Endothelial cell of umbilical vein (primary cell): ENCODE measurements at regions of chrX and their contacts with region 1.

Region 1: GRCh38 chrX:37745354-37745753 is 34.5 kb upstream of the CYBB start:
- DNase-seq: peak; percentile 51
- H3K4me3 ChIP-seq: no peak overlapping the region
- H3K27ac ChIP-seq: no peak overlapping the region
- H3K4me1 ChIP-seq: no peaks in the 10 kb centered on the region
- H3K27me3 ChIP-seq: no peaks in the 10 kb centered on the region
- CTCF ChIP-seq: peak; percentile 56 to 63
- POLR2A ChIP-seq: no peak

Region 2: GRCh38 chrX:37380920-37381319 is 364.4 kb before region 1 on chrX:
- CTCF ChIA-PET with region 1: no interaction called
- POLR2A ChIA-PET with region 1: no interaction called
- dilution Hi-C with region 1: no loop called
- intact Hi-C with region 1: no loop called
- DNase-seq: peak; percentile 91
- H3K4me3 ChIP-seq: no peak overlapping the region
- H3K27ac ChIP-seq: peak overlapping the region; percentile 53
- H3K4me1 ChIP-seq: peaks cover 37% of the 10 kb centered on the region
- H3K27me3 ChIP-seq: no peaks in the 10 kb centered on the region
- CTCF ChIP-seq: no peak
- POLR2A ChIP-seq: peak; percentile 26

Region 3: GRCh38 chrX:37825209-37825842 is 80.0 kb after region 1 on chrX:
- CTCF ChIA-PET with region 1: interaction called, 33 read pairs
- POLR2A ChIA-PET with region 1: no interaction called
- dilution Hi-C with region 1: no loop called
- intact Hi-C with region 1: loop called (anchors 1 kb)
- DNase-seq: peak; percentile 33
- H3K4me3 ChIP-seq: no peak overlapping the region
- H3K27ac ChIP-seq: no peak overlapping the region
- H3K4me1 ChIP-seq: no peaks in the 10 kb centered on the region
- H3K27me3 ChIP-seq: no peaks in the 10 kb centered on the region
- CTCF ChIP-seq: peak; percentile 59
- POLR2A ChIP-seq: no peak

Region 4: DNA sequence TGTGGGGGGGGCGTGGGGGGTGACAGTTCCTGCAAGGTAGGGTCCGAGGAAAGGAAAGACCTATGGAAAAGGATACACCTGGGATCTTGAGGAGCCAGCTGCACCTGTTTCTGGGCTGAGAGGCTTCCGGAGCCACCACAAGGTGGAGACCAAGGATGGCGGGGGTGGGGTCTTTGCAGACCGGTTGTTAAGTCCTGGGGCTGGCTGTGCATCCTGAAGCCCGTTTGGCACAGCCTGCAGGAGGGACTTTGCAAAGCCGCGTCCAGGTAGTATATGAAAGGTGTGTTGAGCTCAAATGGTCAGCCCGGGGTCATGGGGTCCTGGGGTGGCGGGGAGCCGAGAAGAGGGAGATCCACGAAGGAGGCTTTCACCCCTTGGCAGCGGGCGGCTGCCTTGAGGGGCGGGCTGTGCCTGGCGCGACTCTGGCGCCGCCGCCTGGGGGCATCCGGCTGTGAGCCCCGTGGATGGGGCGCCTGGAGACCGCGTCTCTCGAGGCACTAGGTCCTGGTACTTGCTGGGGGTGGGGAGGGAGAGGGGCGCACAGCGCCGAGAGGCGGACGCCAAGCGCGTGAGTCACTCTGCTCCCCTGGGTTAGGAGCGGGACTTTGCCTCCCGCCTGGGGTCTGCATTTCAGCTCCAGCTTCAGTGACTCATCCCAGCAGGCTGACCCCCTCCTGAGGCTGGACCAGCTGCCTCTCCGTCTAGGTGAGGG is 160.2 kb after region 1 on chrX:
- CTCF ChIA-PET with region 1: no interaction called
- POLR2A ChIA-PET with region 1: no interaction called
- dilution Hi-C with region 1: no loop called
- intact Hi-C with region 1: loop called (anchors 10 kb)
- DNase-seq: peak; percentile 18
- H3K4me3 ChIP-seq: peak overlapping the region in 2 of 3 experiments; percentile 17
- H3K27ac ChIP-seq: no peak overlapping the region
- H3K4me1 ChIP-seq: peaks cover 7% of the 10 kb centered on the region
- H3K27me3 ChIP-seq: peaks cover 0 to 5% of the 10 kb centered on the region in 2 experiments
- CTCF ChIP-seq: peak in 1 of 2 donors; percentile 29
- POLR2A ChIP-seq: no peak

Region 5: GRCh38 chrX:37926700-37927099 is 181.3 kb after region 1 on chrX:
- CTCF ChIA-PET with region 1: interaction called, 4 read pairs
- POLR2A ChIA-PET with region 1: no interaction called
- dilution Hi-C with region 1: no loop called
- intact Hi-C with region 1: loop called (anchors 5 kb)
- DNase-seq: peak; percentile 29
- H3K4me3 ChIP-seq: no peak overlapping the region
- H3K27ac ChIP-seq: no peak overlapping the region
- H3K4me1 ChIP-seq: peaks cover 7% of the 10 kb centered on the region
- H3K27me3 ChIP-seq: no peaks in the 10 kb centered on the region
- CTCF ChIP-seq: peak in 1 of 2 donors; percentile 19
- POLR2A ChIP-seq: no peak

Region 6: DNA sequence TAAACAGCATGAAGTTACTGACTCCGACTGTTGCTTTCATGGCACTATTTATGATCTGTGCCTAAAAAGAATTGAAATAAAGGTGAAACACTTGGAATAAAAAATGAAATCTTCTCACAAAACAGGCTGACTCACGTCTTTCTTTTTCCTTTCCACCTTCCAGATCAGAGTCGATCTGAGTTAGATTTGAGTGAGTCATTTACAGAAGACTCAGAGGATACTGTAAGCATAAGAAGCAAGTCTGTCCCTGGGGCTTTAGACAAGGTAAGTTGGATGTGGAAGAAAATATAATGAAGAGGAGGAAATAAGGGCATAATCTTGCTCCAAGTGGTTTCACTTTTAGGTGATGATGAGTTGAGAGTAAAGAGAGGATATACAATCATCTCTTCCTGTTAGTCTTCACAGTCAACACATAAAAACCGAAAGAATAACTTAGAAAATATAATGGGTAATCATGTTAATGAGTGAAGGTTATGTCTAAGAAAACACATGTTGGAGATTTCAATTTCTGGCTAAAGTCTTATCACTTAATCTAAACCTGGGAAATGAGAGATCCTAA is 350.7 kb after region 1 on chrX:
- CTCF ChIA-PET with region 1: no interaction called
- POLR2A ChIA-PET with region 1: no interaction called
- dilution Hi-C with region 1: no loop called
- intact Hi-C with region 1: no loop called
- DNase-seq: peak; percentile 63
- H3K4me3 ChIP-seq: peak overlapping the region in 1 of 3 experiments; percentile 35
- H3K27ac ChIP-seq: no peak overlapping the region
- H3K4me1 ChIP-seq: peaks cover 12% of the 10 kb centered on the region
- H3K27me3 ChIP-seq: no peaks in the 10 kb centered on the region
- CTCF ChIP-seq: no peak
- POLR2A ChIP-seq: no peak

Region 7: GRCh38 chrX:38166478-38167083 is 421.2 kb after region 1 on chrX:
- CTCF ChIA-PET with region 1: interaction called, 29 read pairs
- POLR2A ChIA-PET with region 1: no interaction called
- dilution Hi-C with region 1: no loop called
- intact Hi-C with region 1: no loop called
- DNase-seq: peak; percentile 26
- H3K4me3 ChIP-seq: no peak overlapping the region
- H3K27ac ChIP-seq: no peak overlapping the region
- H3K4me1 ChIP-seq: no peaks in the 10 kb centered on the region
- H3K27me3 ChIP-seq: no peaks in the 10 kb centered on the region
- CTCF ChIP-seq: peak; percentile 4 to 10
- POLR2A ChIP-seq: no peak

Region 8: GRCh38 chrX:38175140-38175539 is 429.8 kb after region 1 on chrX:
- CTCF ChIA-PET with region 1: interaction called, 12 read pairs
- POLR2A ChIA-PET with region 1: no interaction called
- dilution Hi-C with region 1: no loop called
- intact Hi-C with region 1: loop called (anchors 1 kb)
- DNase-seq: peak; percentile 7
- H3K4me3 ChIP-seq: no peak overlapping the region
- H3K27ac ChIP-seq: no peak overlapping the region
- H3K4me1 ChIP-seq: no peaks in the 10 kb centered on the region
- H3K27me3 ChIP-seq: no peaks in the 10 kb centered on the region
- CTCF ChIP-seq: peak; percentile 10 to 31
- POLR2A ChIP-seq: no peak